Heart left ventricle (tissue), 16 donors: ENCODE measurements at regions of chr9 and their contacts with region 1.

Region 1: GRCh38 chr9:129641746-129642513 is at the start of gene ASB6:
- DNase-seq: peak; percentile 98 to 99 (median 98)
- ATAC-seq: peak; percentile 93 to 97 (median 95)
- H3K4me3 ChIP-seq: peak within 1 kb of the TSS; percentile 69 to 100 (median 95)
- H3K27ac ChIP-seq: peak within 1 kb of the TSS; percentile 55 to 85 (median 82)
- H3K4me1 ChIP-seq: peaks cover 0 to 26% (median 21%) of the 10 kb centered on the region in 12 donors
- H3K27me3 ChIP-seq: no peaks in the 10 kb centered on the region
- CTCF ChIP-seq: peak; percentile 97 to 100 (median 100)
- POLR2A ChIP-seq: peak in 1 of 2 donors; percentile 77
- total RNA-seq, gene ASB6: 7.5 to 22.5 (median 10.3) TPM

Region 2: DNA sequence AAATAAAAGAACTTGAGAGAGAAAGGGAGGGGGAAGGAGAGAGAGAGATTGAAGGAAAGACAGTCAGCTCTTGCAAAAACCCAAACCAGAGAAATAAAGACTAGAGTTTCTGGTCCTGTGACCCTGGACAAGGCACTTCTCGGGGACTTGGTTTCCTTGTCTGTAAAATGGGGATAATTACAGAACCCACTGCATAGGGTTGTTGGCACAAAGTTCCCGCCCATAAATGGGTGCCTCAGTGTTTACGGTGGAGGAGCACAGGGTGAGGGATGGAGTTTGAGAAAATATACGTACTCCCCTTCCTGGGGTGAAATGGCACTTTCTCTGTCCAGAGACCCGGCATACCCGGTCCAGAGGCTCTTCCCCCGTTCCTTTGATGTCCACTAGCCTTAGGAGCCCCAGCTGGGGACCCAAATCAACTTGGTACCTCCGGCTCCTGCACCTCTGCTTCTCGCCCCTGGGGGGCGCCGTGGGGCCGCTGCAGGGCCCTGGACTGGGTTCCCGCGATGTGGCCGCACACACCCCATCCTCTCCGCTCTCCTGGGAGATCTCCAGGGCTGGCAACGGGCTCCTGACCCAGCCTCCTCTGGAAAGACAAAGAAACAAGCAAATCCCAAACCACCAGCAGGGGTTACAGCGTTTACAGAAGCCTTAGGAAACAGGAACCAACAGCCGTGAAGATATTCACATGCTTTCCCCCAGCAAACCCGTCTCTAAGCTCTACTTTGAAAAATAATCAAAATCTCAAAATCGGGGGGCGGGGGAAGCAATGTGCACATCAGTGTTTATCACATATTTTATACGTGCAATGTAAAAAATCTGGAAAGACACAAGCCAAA is 84.6 kb after region 1 on chr9:
- intact Hi-C with region 1: loop called in 6 of 10 experiments (anchors 5 to 10 kb)
- DNase-seq: peak; percentile 75 to 86 (median 78)
- ATAC-seq: peak; percentile 78 to 95 (median 89)
- H3K4me3 ChIP-seq: peak overlapping the region in 5 of 12 donors; percentile 3 to 38 (median 30)
- H3K27ac ChIP-seq: peak overlapping the region in 5 of 12 donors; percentile 31 to 52 (median 42)
- H3K4me1 ChIP-seq: peaks cover 0 to 18% (median 6%) of the 10 kb centered on the region in 12 donors
- H3K27me3 ChIP-seq: peaks cover 0 to 11% (median 0%) of the 10 kb centered on the region in 9 donors
- CTCF ChIP-seq: peak; percentile 85 to 96 (median 92)
- POLR2A ChIP-seq: no peak

Region 3: DNA sequence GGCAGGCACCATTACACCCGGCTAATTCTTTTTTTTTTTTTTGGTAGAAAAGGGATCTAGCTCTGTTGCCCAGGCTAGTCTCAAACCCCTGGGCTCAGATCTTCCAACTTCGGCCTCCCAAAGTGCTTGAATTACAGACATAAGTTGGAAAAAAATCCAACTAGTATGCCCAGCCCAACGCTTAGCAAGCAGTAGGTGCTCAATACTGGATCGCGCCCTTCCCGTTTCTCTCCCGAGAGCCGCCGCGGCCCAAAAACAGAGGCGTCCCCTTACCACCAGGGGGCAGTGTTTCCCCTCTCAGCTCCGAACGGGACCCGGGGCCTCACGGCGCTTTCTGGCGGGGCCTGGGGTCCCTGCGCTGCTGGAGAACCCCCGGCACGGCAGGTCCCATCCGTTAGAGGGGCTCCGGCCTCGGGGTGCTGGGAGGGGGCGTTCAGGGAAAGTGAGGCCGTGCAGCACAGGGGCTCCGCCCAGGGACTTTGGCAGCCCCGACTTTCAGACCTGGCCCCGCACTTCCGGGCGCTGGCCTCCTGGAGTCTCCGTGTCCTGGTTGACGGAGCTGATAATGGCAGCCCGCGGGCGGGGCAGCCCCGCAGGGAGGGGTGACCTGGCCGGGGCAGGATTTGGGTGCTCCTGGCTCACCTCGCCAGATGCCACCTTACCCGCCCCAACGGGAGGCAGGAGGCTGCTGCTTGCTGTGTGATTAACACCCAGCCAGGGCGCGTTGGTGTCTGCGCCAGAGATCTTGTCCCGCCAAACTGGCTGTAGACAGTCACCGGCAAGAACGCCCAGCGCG is 95.7 kb after region 1 on chr9:
- intact Hi-C with region 1: loop called in 5 of 10 experiments (anchors 5 to 10 kb)
- DNase-seq: peak; percentile 81 to 91 (median 84)
- ATAC-seq: peak; percentile 80 to 94 (median 93)
- H3K4me3 ChIP-seq: peak overlapping the region; percentile 17 to 79 (median 63)
- H3K27ac ChIP-seq: peak overlapping the region in 9 of 12 donors; percentile 3 to 65 (median 48)
- H3K4me1 ChIP-seq: peaks cover 0 to 11% (median 5%) of the 10 kb centered on the region in 12 donors
- H3K27me3 ChIP-seq: peaks cover 0 to 6% (median 0%) of the 10 kb centered on the region in 9 donors
- CTCF ChIP-seq: peak; percentile 94 to 98 (median 97)
- POLR2A ChIP-seq: no peak